Right cardiac atrium (tissue), 5 donors: ENCODE measurements at regions of chr10 and their contacts with region 1.

Region 1: DNA sequence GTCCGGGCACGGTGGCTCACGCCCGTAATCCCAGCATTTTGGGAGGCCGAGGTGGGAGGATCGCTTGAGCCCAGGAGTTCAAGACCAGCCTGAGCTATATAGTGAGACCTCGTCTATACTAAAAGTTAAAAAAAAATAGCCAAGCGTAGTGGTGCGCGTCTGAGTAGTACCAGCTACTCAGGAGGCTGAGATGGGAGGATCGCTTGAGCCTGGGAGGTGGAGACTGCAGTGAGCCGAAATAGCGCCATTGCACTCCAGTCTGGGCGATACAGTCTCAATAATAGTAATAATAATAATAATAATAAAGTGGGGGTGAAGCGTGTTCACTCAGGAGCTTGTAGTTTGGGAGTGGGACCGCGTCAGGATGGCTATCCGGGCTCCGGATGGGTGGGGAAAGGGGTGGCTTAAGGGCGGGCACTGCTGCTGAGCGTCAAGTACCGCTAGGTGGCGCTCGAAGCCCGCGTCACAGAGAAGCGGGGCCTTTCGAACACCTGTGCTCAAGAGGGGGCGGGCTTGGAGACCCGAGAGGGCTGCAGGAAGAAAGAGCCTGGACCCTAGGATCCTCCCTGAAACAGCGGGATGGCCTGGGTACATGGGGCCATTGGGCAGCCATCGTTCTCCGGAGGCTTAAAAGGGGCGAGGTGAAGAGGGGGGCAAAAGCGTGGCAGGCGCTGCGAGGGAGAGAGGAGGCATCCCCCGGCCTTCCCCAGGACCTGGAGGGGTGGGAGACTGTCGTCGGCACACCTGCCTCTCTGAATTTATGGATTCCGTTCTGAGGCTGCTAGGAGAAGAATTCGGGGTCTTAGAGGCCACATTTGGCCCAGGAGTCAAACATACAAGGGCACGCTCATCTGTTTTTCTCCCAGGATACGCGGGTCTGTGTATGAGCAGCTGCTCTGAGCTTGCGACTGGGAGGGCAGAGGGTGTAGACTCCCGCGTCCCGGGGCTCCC is 14.5 kb downstream of the LBX1 start:
- DNase-seq: peak; percentile 69 to 86 (median 81)
- ATAC-seq: peak; percentile 75 to 85
- H3K4me3 ChIP-seq: no peak overlapping the region
- H3K27ac ChIP-seq: no peak overlapping the region
- H3K4me1 ChIP-seq: peaks cover 2% of the 10 kb centered on the region
- H3K27me3 ChIP-seq: peaks cover under 1% of the 10 kb centered on the region

Region 2: GRCh38 chr10:101297901-101298486 is 83.3 kb after region 1 on chr10:
- intact Hi-C with region 1: loop called in 2 of 4 experiments (anchors 10 kb)
- DNase-seq: peak; percentile 57 to 82 (median 78)
- ATAC-seq: peak; percentile 28 to 68
- H3K4me3 ChIP-seq: no peak overlapping the region
- H3K27ac ChIP-seq: no peak overlapping the region
- H3K4me1 ChIP-seq: no peaks in the 10 kb centered on the region
- H3K27me3 ChIP-seq: no peaks in the 10 kb centered on the region

Region 3: GRCh38 chr10:101441541-101442455 is 227.1 kb after region 1 on chr10:
- intact Hi-C with region 1: loop called in 2 of 4 experiments (anchors 10 kb)
- DNase-seq: peak in 2 of 3 donors; percentile 12 to 40
- ATAC-seq: peak; percentile 88 to 90
- H3K4me3 ChIP-seq: no peak overlapping the region
- H3K27ac ChIP-seq: no peak overlapping the region
- H3K4me1 ChIP-seq: peaks cover 2% of the 10 kb centered on the region
- H3K27me3 ChIP-seq: no peaks in the 10 kb centered on the region

Region 4: GRCh38 chr10:101467286-101467770 is 252.6 kb after region 1 on chr10:
- intact Hi-C with region 1: loop called in 1 of 4 experiments (anchors 10 kb)
- DNase-seq: no peak
- ATAC-seq: peak; percentile 84
- H3K4me3 ChIP-seq: no peak overlapping the region
- H3K27ac ChIP-seq: no peak overlapping the region
- H3K4me1 ChIP-seq: no peaks in the 10 kb centered on the region
- H3K27me3 ChIP-seq: no peaks in the 10 kb centered on the region

Region 5: GRCh38 chr10:101569838-101570766 is 355.4 kb after region 1 on chr10:
- intact Hi-C with region 1: loop called (anchors 2 to 5 kb)
- DNase-seq: peak; percentile 81 to 94 (median 92)
- ATAC-seq: peak; percentile 89 to 91
- H3K4me3 ChIP-seq: peak overlapping the region; percentile 72
- H3K27ac ChIP-seq: no peak overlapping the region
- H3K4me1 ChIP-seq: no peaks in the 10 kb centered on the region
- H3K27me3 ChIP-seq: no peaks in the 10 kb centered on the region

Region 6: DNA sequence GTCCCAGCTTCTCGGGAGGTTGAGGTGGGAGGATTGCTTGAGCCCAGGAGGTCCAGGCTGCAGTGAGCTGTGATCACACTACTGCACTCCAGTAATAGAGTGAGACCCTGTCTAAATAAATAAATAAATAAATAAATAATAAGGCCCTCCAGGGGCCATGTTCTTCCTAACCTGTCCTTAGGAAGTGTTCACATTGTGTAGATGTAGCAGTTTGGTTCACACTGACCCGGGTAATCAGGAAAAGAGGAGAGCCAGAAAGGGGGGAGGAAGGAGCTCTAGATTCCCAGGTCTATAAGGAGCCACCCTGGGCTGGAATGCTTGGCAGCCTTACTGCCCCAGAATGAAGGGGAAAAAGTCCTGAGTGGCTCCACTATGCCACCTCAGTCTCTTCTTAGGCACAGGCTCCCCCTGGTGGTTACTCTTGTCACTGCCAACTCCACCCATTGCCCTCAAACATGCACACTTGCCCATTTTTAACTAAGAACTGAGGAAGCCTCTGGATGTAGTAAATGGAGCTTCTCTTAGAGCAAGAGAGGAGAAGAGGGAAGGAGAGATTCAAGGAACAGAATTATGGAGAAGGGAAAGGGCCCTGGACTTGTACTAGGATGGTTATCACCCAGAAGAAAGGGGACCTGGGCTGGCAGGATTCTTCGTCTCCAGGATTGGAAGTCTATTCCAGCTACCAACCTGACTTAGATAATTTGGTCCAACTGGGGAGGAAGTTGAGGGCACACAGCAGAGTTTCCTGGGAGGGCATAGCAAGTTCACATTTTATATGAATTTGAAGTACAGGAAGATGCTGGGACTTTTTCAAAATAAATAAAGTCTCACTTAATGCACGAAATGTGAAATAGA is 858.2 kb after region 1 on chr10:
- intact Hi-C with region 1: loop called in 1 of 4 experiments (anchors 10 kb)
- DNase-seq: peak; percentile 80 to 91 (median 86)
- ATAC-seq: peak; percentile 79 to 89
- H3K4me3 ChIP-seq: no peak overlapping the region
- H3K27ac ChIP-seq: no peak overlapping the region
- H3K4me1 ChIP-seq: peaks cover 4% of the 10 kb centered on the region
- H3K27me3 ChIP-seq: no peaks in the 10 kb centered on the region